Activated CD8-positive, alpha-beta T cell treated with anti-CD3 and anti-CD28 coated beads for 36 hours (primary cell): ENCODE measurements at regions of chr14 and their contacts with region 1.

Region 1: DNA sequence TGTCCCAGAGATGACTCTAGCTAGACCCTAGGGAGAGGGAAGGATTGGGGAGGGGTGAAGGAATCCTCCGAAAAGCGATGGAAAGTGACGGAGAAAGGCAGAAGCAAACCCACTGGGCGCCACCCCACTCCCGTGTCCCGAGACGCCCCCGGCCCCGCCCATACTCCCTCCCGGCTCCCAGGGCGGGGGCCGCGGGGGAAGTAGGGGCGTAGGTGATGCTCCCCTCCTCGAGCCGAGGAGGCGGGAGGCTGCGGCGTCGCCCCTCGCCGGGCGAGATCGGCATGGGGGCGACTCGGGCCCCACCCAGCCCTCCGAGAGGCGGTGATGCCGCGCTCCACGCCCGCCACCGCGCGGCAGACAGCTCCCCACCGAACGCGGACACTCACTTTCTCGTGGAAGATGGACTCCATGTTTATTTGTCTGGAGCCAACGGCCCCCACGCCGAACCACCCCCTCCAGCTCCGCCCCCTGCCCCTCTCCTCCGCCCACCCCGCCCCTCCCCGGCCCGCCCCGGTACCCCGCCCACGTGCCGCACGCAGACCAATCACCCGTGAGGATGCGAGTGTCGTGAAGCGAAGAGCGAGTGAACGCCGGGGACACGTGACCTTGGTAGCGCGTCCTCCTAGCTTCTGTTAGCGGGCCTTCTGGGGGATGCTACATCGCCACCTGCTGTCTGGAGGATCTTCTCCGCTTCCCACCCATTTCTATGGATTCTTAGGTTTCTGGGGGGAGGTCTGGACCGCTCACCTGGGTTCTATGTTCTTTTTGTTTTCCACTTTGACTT is at the start of gene ATXN3:
- DNase-seq: peak; percentile 98
- ATAC-seq: peak; percentile 94
- H3K4me3 Mint-ChIP-seq: peak within 1 kb of the TSS; percentile 88
- H3K27ac Mint-ChIP-seq: peak within 1 kb of the TSS; percentile 94
- H3K4me1 Mint-ChIP-seq: peaks cover 43% of the 10 kb centered on the region
- H3K27me3 Mint-ChIP-seq: no peaks in the 10 kb centered on the region
- CTCF ChIP-seq: peak; percentile 67
- total RNA-seq, gene ATXN3: 28.4 to 29.7 TPM

Region 2: GRCh38 chr14:92039719-92040430 is 66.5 kb before region 1 on chr14 and contains the start of gene TRIP11:
- CTCF ChIA-PET with region 1: interaction called, 15 read pairs
- POLR2A ChIA-PET with region 1: interaction called, 22 read pairs
- intact Hi-C with region 1: no loop called
- DNase-seq: peak; percentile 97
- ATAC-seq: peak; percentile 94
- H3K4me3 Mint-ChIP-seq: peak within 1 kb of the TSS; percentile 98
- H3K27ac Mint-ChIP-seq: peak within 1 kb of the TSS; percentile 93
- H3K4me1 Mint-ChIP-seq: peaks cover 32% of the 10 kb centered on the region
- H3K27me3 Mint-ChIP-seq: no peaks in the 10 kb centered on the region
- CTCF ChIP-seq: no peak
- total RNA-seq, gene TRIP11: 33.5 to 35.5 TPM

Region 3: GRCh38 chr14:92093320-92093719 is 13.0 kb before region 1 on chr14:
- CTCF ChIA-PET with region 1: interaction called, 13 read pairs
- POLR2A ChIA-PET with region 1: no interaction called
- intact Hi-C with region 1: no loop called
- DNase-seq: peak; percentile 38
- ATAC-seq: peak; percentile 47
- H3K4me3 Mint-ChIP-seq: no peak overlapping the region
- H3K27ac Mint-ChIP-seq: no peak overlapping the region
- H3K4me1 Mint-ChIP-seq: no peaks in the 10 kb centered on the region
- H3K27me3 Mint-ChIP-seq: no peaks in the 10 kb centered on the region
- CTCF ChIP-seq: no peak

Region 4: GRCh38 chr14:92121670-92122350 is 15.5 kb after region 1 on chr14 and contains the starts of genes CPSF2 and NDUFB1:
- CTCF ChIA-PET with region 1: interaction called, 127 read pairs
- POLR2A ChIA-PET with region 1: interaction called, 44 read pairs
- intact Hi-C with region 1: no loop called
- DNase-seq: peak; percentile 87
- ATAC-seq: peak; percentile 90
- H3K4me3 Mint-ChIP-seq: peak within 1 kb of the TSS; percentile 92
- H3K27ac Mint-ChIP-seq: peak within 1 kb of the TSS; percentile 99
- H3K4me1 Mint-ChIP-seq: peaks cover 35% of the 10 kb centered on the region
- H3K27me3 Mint-ChIP-seq: no peaks in the 10 kb centered on the region
- CTCF ChIP-seq: no peak
- total RNA-seq, gene CPSF2: 96.2 to 103 TPM
- total RNA-seq, gene NDUFB1: 102 TPM

Region 5: GRCh38 chr14:92135267-92135666 is 28.9 kb after region 1 on chr14:
- CTCF ChIA-PET with region 1: interaction called, 10 read pairs
- POLR2A ChIA-PET with region 1: interaction called, 4 read pairs
- intact Hi-C with region 1: no loop called
- DNase-seq: no peak
- ATAC-seq: no peak
- H3K4me3 Mint-ChIP-seq: no peak overlapping the region
- H3K27ac Mint-ChIP-seq: no peak overlapping the region
- H3K4me1 Mint-ChIP-seq: peaks cover 2% of the 10 kb centered on the region
- H3K27me3 Mint-ChIP-seq: no peaks in the 10 kb centered on the region
- CTCF ChIP-seq: peak; percentile 55